Endothelial cell of umbilical vein (primary cell): ENCODE measurements at regions of chr13 and their contacts with region 1.

Region 1: GRCh38 chr13:20924758-20925394 is 22.3 kb upstream of the XPO4 start:
- DNase-seq: peak; percentile 81
- H3K4me3 ChIP-seq: no peak overlapping the region
- H3K27ac ChIP-seq: no peak overlapping the region
- H3K4me1 ChIP-seq: no peaks in the 10 kb centered on the region
- H3K27me3 ChIP-seq: no peaks in the 10 kb centered on the region
- CTCF ChIP-seq: peak; percentile 63 to 70
- POLR2A ChIP-seq: no peak

Region 2: DNA sequence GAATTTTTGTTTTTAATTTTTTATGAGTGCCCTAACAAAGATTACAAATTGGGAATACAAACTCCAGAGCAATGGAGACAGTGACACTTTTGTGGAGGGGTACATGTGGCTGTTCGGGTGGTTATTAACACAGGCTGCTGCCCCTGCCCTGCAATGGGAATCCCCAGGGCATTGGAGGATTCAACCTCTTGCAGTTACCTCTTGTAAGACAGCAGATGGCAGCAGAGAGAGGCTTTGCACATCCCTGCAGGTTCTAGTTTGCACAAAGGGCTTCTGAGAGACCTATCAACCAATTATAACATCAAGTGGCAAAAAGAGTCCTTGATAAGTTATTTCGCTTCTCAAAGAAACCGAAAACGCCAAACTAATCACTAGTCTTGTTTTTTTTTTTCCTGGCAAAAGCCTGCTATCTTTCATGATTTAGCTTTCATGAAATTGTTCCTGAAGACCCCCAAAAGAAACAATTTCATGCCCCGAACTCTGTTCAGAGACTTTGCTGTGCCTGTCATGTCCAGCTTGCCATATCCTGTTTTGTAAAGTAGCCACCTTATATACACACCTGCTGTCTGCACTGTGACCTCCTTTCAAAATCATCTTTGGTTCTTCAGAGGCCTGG is 742.5 kb before region 1 on chr13:
- CTCF ChIA-PET with region 1: interaction called, 11 read pairs
- POLR2A ChIA-PET with region 1: no interaction called
- dilution Hi-C with region 1: no loop called
- intact Hi-C with region 1: loop called (anchors 2 kb)
- DNase-seq: peak; percentile 68
- H3K4me3 ChIP-seq: no peak overlapping the region
- H3K27ac ChIP-seq: no peak overlapping the region
- H3K4me1 ChIP-seq: no peaks in the 10 kb centered on the region
- H3K27me3 ChIP-seq: peaks cover 28 to 45% of the 10 kb centered on the region in 2 experiments
- CTCF ChIP-seq: peak; percentile 74 to 78
- POLR2A ChIP-seq: no peak

Region 3: DNA sequence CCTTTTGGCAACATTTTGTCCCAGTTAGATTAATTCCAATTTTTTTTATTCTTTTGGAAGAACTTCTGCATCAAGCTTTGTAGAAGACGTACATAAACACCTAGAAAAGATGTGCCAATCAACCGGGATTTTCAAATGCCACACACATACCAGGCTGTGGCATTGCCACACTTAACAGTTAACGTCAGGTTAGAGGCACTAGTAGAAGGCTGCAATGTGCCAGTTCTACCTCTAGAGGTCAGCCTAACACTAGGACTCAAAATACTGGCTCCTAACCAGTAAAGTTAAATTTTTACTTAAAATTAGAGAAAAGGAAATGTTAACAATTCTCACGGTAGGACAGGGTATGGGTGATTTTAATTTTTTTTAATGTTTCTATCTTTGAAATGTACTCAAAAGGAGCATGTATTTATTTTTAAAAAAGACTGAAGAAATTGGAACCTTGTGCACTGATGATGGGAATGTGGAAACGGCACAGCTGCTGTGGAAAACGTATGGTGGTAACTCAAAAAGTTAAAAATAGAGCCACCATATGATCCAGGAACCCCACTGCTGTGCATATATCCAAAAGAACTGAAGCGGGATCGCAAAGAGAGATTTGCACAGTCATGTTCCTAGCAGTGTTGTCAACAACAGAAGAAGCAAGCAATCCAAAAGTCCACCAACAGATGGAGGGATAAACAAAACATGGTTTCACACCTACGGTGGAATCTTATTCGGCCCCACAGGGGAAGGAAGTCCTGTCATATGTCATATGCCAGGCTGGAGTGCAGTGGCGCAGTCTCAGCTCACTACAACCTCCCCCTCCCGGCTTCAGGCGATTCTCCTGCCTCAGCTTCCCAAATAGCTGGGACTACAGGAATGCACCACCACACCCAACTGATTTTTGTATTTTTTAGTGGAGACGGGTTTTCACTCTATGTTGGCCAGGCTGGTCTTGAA is 429.5 kb before region 1 on chr13:
- CTCF ChIA-PET with region 1: interaction called, 239 read pairs
- POLR2A ChIA-PET with region 1: no interaction called
- dilution Hi-C with region 1: no loop called
- intact Hi-C with region 1: loop called (anchors 1 kb)
- DNase-seq: peak; percentile 76
- H3K4me3 ChIP-seq: no peak overlapping the region
- H3K27ac ChIP-seq: peak overlapping the region; percentile 34
- H3K4me1 ChIP-seq: peaks cover 4% of the 10 kb centered on the region
- H3K27me3 ChIP-seq: no peaks in the 10 kb centered on the region
- CTCF ChIP-seq: peak; percentile 73
- POLR2A ChIP-seq: no peak

Region 4: DNA sequence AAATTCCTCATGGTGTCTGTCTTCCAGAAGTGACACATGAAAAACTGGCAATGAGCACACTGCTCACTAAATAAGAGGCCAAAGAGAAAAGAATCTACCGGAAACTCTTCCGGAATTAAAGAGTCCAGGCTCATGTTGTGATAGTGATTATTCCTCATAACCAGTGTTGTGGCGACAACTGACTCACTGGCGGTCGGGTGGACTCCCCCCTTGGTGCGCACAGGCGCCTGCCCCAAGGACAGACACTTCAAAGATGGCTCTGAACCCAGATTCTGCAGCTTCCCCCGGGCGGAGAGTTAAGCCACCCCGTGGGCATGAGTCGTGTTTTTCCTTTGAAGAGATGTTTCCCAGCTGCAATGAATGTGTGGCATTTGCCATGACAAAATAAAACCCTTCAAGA is 211.1 kb before region 1 on chr13:
- CTCF ChIA-PET with region 1: interaction called, 13 read pairs
- POLR2A ChIA-PET with region 1: no interaction called
- dilution Hi-C with region 1: no loop called
- intact Hi-C with region 1: loop called (anchors 1 kb)
- DNase-seq: peak; percentile 38
- H3K4me3 ChIP-seq: no peak overlapping the region
- H3K27ac ChIP-seq: peak overlapping the region; percentile 56
- H3K4me1 ChIP-seq: peaks cover 38% of the 10 kb centered on the region
- H3K27me3 ChIP-seq: no peaks in the 10 kb centered on the region
- CTCF ChIP-seq: no peak
- POLR2A ChIP-seq: no peak

Region 5: GRCh38 chr13:20869542-20869941 is 55.3 kb before region 1 on chr13:
- CTCF ChIA-PET with region 1: interaction called, 24 read pairs
- POLR2A ChIA-PET with region 1: no interaction called
- dilution Hi-C with region 1: no loop called
- intact Hi-C with region 1: no loop called
- DNase-seq: peak; percentile 30
- H3K4me3 ChIP-seq: no peak overlapping the region
- H3K27ac ChIP-seq: no peak overlapping the region
- H3K4me1 ChIP-seq: peaks cover 16% of the 10 kb centered on the region
- H3K27me3 ChIP-seq: no peaks in the 10 kb centered on the region
- CTCF ChIP-seq: no peak
- POLR2A ChIP-seq: no peak

Region 6: DNA sequence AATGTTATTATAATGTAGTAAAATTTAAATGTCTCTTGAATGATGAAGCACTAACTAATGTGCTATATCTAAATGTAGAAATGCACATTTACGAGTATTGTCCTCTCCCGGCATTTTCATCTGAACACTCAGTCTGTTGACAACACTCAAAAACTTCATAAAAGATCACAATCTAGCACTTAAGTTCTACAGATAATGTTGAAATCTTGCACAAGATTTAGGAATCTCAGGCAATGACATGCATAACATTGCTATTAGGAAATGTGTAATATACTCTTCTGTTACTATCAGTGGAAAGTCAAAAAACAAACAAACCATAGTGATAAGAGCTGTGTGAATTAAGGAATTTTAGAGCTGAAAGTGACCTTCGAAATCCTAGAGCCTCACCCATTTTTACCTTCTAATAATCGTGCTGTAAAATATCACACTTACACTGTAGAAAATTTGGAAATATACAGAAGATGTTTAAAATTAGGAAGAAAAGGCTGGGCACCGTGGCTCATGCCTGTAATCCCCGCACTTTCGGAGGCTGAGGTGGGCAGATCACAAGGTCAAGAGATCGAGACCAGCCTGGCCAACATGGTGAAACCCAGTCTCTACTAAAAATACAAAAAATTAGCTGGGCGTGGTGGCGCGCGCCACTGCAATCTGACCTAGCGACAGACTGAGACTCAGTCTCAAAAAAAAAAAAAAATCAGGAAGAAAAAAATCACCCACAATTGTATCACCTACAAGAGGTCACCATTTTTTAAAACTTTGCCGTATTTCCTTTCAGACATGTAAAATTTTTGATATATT is 15.4 kb after region 1 on chr13:
- CTCF ChIA-PET with region 1: interaction called, 25 read pairs
- POLR2A ChIA-PET with region 1: no interaction called
- dilution Hi-C with region 1: no loop called
- intact Hi-C with region 1: no loop called
- DNase-seq: no peak
- H3K4me3 ChIP-seq: no peak overlapping the region
- H3K27ac ChIP-seq: no peak overlapping the region
- H3K4me1 ChIP-seq: no peaks in the 10 kb centered on the region
- H3K27me3 ChIP-seq: no peaks in the 10 kb centered on the region
- CTCF ChIP-seq: no peak
- POLR2A ChIP-seq: no peak

Region 7: GRCh38 chr13:21181671-21182070 is 256.8 kb after region 1 on chr13:
- CTCF ChIA-PET with region 1: no interaction called
- POLR2A ChIA-PET with region 1: no interaction called
- dilution Hi-C with region 1: no loop called
- intact Hi-C with region 1: no loop called
- DNase-seq: no peak
- H3K4me3 ChIP-seq: no peak overlapping the region
- H3K27ac ChIP-seq: no peak overlapping the region
- H3K4me1 ChIP-seq: peaks cover 6% of the 10 kb centered on the region
- H3K27me3 ChIP-seq: no peaks in the 10 kb centered on the region
- CTCF ChIP-seq: no peak
- POLR2A ChIP-seq: no peak

Region 8: DNA sequence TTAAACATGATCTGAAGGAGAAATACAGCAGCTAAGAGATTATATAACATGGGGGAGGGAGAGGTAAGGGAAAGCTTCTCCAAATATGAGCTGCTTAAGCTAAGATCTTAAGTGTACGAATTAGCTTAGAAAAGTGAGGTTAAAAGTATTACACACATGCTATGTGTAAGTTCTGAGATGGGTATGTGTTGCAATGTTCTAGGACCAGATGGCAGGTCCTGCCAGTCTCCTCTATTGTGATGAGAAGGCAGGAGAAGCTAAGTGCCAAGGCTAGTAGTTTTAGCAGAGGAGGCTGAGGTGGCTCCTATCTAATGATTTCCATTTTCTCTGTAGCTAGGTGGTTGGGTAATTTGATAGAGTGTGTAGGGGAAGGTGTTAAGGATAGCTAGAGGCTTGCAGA is 621.5 kb after region 1 on chr13:
- CTCF ChIA-PET with region 1: no interaction called
- POLR2A ChIA-PET with region 1: no interaction called
- dilution Hi-C with region 1: no loop called
- intact Hi-C with region 1: no loop called
- DNase-seq: no peak
- H3K4me3 ChIP-seq: no peak overlapping the region
- H3K27ac ChIP-seq: no peak overlapping the region
- H3K4me1 ChIP-seq: no peaks in the 10 kb centered on the region
- H3K27me3 ChIP-seq: no peaks in the 10 kb centered on the region
- CTCF ChIP-seq: no peak
- POLR2A ChIP-seq: no peak